Sigmoid colon (tissue), 7 donors: ENCODE measurements at regions of chr5 and their contacts with region 1.

Region 1: DNA sequence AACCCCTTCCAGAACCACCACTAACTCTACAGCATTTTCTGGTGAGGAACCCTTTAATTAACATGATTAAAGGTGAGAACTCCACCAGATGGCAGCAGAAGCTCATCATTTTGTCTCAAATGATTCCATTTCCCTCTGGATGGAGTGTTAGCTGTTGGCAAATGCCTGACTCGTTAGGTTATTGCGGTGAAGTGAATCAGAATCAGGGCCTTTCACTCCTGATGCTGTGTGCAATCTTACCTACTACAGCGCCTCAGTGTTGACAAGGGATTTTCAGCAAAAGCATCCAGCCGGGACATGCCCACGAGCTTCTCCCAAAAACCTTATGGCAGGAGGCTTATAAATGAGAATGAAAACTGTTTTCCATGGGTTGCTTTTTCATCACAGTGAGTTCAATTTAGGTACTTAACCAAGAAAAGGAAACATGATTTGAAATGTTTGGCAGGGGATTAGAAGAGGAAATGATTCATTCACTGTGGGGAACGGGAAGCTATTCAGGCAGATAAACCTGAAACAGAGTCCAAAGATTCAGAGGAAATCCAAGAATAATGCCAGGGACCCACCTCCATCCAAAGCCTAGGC is 48.0 kb upstream of the CAST start:
- DNase-seq: peak; percentile 76
- H3K4me3 ChIP-seq: no peak overlapping the region
- H3K27ac ChIP-seq: peak overlapping the region in 3 of 4 donors; percentile 14 to 58 (median 20)
- H3K4me1 ChIP-seq: peaks cover 0 to 10% (median 3%) of the 10 kb centered on the region in 4 donors
- H3K27me3 ChIP-seq: no peaks in the 10 kb centered on the region
- CTCF ChIP-seq: peak; percentile 35 to 55 (median 52)
- EP300 ChIP-seq: no peak
- POLR2A ChIP-seq: no peak

Region 2: DNA sequence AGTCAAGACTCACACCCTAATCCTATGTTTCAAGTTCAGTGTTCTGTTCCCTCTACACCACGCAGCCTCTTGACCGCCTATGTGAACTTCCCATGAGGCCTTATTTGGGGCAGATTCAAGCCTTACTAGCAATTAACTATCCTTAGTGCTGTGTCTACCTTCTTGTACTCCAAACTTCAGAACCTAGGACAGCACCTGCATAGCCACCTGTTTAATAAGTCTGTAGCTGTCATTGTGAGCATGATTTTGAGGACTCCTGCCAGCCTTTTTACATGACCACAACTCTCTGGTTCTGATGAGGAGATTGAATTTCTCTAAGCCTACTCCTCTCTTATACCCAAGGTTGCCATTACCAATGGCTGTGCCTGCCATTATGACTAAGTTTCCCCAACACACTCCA is 130.3 kb before region 1 on chr5:
- intact Hi-C with region 1: no loop called
- DNase-seq: no peak
- H3K4me3 ChIP-seq: no peak overlapping the region
- H3K27ac ChIP-seq: no peak overlapping the region
- H3K4me1 ChIP-seq: no peaks in the 10 kb centered on the region
- H3K27me3 ChIP-seq: no peaks in the 10 kb centered on the region
- CTCF ChIP-seq: no peak
- EP300 ChIP-seq: no peak
- POLR2A ChIP-seq: no peak

Region 3: GRCh38 chr5:96662725-96663513 is 48.7 kb after region 1 on chr5:
- intact Hi-C with region 1: loop called (anchors 5 kb)
- DNase-seq: peak; percentile 97
- H3K4me3 ChIP-seq: peak overlapping the region; percentile 92 to 98 (median 94)
- H3K27ac ChIP-seq: peak overlapping the region; percentile 99 to 100 (median 100)
- H3K4me1 ChIP-seq: peaks cover 0 to 44% (median 19%) of the 10 kb centered on the region in 4 donors
- H3K27me3 ChIP-seq: no peaks in the 10 kb centered on the region
- CTCF ChIP-seq: no peak
- EP300 ChIP-seq: no peak
- POLR2A ChIP-seq: peak; percentile 65 to 81

Region 4: GRCh38 chr5:96726802-96727201 is 112.6 kb after region 1 on chr5:
- intact Hi-C with region 1: loop called (anchors 2 kb)
- DNase-seq: no peak
- H3K4me3 ChIP-seq: no peak overlapping the region
- H3K27ac ChIP-seq: no peak overlapping the region
- H3K4me1 ChIP-seq: peaks cover 0 to 10% (median 4%) of the 10 kb centered on the region in 4 donors
- H3K27me3 ChIP-seq: no peaks in the 10 kb centered on the region
- CTCF ChIP-seq: no peak
- EP300 ChIP-seq: no peak
- POLR2A ChIP-seq: no peak

Region 5: DNA sequence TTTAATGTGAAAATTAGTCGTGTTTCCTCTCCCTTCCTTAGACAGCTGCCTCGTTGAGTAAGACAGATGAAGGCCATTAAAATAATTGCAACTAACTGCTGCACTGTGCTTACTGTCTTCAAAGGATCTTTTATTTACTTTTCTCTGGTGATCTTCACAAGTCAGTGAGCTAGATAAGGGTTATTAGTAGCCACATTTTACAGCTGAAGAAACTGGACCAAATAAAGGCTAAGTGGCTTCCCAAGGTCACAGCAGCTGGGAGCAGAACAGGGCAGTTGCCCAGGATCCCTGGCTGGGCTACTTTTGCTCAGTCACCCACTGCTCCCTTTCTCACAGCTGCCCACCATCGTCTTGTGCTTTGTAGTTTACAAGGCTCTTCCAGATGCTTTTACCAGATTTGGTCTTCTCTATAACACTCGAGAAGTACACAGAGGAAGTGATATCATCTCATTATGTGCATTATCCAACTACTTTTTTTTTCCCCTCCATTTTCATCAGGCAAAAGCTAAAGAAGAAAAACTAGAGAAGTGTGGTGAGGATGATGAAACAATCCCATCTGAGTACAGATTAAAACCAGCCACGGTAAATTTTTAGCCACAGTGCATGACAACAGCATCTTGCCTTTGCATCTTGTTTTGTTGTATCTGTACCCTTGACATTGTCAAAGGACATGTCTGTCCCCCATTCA is 131.8 kb after region 1 on chr5:
- intact Hi-C with region 1: loop called (anchors 5 kb)
- DNase-seq: no peak
- H3K4me3 ChIP-seq: no peak overlapping the region
- H3K27ac ChIP-seq: peak overlapping the region in 3 of 4 donors; percentile 37 to 67 (median 66)
- H3K4me1 ChIP-seq: peaks cover 0 to 54% (median 34%) of the 10 kb centered on the region in 4 donors
- H3K27me3 ChIP-seq: no peaks in the 10 kb centered on the region
- CTCF ChIP-seq: no peak
- EP300 ChIP-seq: no peak
- POLR2A ChIP-seq: no peak

Region 6: DNA sequence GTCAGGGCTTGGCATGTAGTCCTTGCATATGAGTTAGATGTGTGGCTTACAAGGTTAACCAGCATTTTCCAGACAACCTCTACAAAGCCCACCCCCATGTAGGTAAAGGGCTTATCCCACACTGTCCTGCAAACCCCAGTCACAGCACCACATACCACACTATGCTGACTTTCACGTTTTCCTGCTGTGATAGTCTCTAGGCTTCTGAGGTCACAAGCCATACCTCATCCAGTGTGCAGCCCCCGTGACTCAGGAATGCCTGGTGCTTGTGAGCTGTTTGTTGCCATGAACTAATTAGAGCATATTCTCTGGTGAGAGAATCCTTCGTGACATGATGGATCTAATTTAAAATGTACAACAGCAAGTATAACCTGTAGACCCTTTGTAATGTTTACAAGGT is 142.8 kb after region 1 on chr5:
- intact Hi-C with region 1: no loop called
- DNase-seq: no peak
- H3K4me3 ChIP-seq: no peak overlapping the region
- H3K27ac ChIP-seq: no peak overlapping the region
- H3K4me1 ChIP-seq: peaks cover 0 to 6% (median 2%) of the 10 kb centered on the region in 4 donors
- H3K27me3 ChIP-seq: no peaks in the 10 kb centered on the region
- CTCF ChIP-seq: no peak
- EP300 ChIP-seq: no peak
- POLR2A ChIP-seq: no peak

Region 7: DNA sequence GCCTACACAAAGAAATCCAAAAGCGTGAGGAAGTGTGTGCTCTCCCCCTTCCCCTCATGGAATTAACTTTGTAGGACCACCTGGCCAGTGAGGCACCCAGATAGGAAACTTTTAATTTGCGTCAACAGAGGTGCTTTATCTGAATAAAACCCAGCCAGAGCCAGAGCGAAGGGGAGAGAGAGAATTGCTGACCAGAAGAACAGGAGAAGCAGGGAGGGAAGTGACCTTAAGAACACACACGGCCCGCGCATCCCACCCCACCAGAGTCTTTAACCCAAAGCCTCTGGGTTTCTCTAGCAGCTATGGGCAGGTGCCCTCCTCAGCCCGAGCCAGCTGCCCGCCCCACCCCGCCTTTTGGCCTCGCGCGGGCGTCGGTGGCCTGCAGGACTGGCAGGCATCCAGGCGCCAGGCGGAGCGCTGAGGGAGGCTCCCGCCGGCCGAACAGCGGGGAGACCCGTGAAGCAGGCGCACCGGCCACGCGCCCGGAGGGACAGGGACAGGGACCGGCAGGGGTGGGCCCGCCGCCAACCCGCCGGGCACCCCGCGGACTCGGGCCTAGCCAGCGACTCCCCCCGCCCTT is 193.0 kb after region 1 on chr5:
- intact Hi-C with region 1: loop called (anchors 10 kb)
- DNase-seq: peak; percentile 89
- H3K4me3 ChIP-seq: peak overlapping the region; percentile 69 to 99 (median 92)
- H3K27ac ChIP-seq: peak overlapping the region; percentile 93 to 100 (median 98)
- H3K4me1 ChIP-seq: peaks cover 0 to 30% (median 19%) of the 10 kb centered on the region in 4 donors
- H3K27me3 ChIP-seq: no peaks in the 10 kb centered on the region
- CTCF ChIP-seq: no peak
- EP300 ChIP-seq: no peak
- POLR2A ChIP-seq: no peak

Region 8: DNA sequence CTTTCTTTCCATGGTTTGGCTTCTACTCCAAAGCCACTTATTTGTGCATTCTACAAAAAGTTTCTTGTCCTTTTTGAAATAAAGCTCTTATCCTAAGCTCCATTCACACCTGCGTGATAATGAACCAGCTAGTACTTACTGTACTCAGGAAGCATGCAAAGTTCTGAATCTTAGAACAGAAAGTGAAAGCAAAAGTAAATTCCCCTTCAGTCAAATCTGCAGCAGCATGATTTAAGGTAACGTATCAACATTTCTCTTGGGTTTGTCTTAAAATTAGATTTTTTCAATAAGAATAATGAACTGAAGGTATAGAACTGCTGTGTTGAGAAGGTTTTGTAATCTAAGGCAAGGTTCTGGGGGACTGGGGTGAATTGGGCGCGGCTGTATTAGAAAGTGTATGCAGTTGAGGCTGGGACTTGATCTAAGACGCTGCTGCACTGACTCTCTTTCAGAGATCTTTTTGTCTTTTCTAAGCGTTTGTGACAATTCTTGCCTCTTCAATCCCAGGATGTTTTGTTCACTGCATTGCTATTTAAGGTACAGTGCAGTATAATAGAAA is 262.2 kb after region 1 on chr5 and contains the start of gene ERAP2:
- intact Hi-C with region 1: loop called (anchors 5 kb)
- DNase-seq: no peak
- H3K4me3 ChIP-seq: peak within 1 kb of the TSS; percentile 59 to 66 (median 62)
- H3K27ac ChIP-seq: peak within 1 kb of the TSS; percentile 70 to 78 (median 74)
- H3K4me1 ChIP-seq: peaks cover 0 to 15% (median 3%) of the 10 kb centered on the region in 4 donors
- H3K27me3 ChIP-seq: no peaks in the 10 kb centered on the region
- CTCF ChIP-seq: no peak
- EP300 ChIP-seq: no peak
- POLR2A ChIP-seq: no peak
- total RNA-seq, gene ERAP2: 7.7 to 10.7 (median 8.2) TPM

Region 9: DNA sequence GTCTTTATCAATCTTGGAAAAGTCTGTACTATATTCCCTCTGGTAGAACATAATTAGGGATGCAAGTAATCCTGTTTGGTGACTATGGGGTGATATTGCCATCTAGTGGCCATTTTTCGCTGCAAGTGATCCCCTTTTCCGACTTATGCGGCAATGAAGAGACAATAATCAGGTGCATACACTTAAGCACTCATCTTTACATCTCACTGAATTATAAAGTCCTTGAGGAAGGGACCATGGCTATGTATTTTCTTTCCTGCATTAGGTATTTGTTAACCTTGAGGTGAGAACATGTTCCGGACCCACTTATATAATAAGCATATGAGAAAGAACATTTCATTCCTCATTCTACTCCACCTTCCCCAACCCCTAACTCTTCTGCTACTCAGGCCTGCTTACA is 547.8 kb after region 1 on chr5:
- intact Hi-C with region 1: loop called (anchors 5 kb)
- DNase-seq: peak; percentile 76
- H3K4me3 ChIP-seq: no peak overlapping the region
- H3K27ac ChIP-seq: no peak overlapping the region
- H3K4me1 ChIP-seq: no peaks in the 10 kb centered on the region
- H3K27me3 ChIP-seq: no peaks in the 10 kb centered on the region
- CTCF ChIP-seq: peak; percentile 78 to 91 (median 81)
- EP300 ChIP-seq: no peak
- POLR2A ChIP-seq: no peak